ENCODE measurements at regions of chr4 and their contacts with region 1.

Region 1: GRCh38 chr4:2536193-2537010 is at the start of gene FAM193A:
- DNase-seq: peak; percentile 97 to 100 (median 100)

Region 2: GRCh38 chr4:2241410-2242353 is 294.7 kb before region 1 on chr4 and contains the starts of genes HAUS3 and POLN:
- intact Hi-C with region 1: loop called (anchors 2 kb)
- DNase-seq: peak; percentile 96 to 100 (median 98)

Region 3: GRCh38 chr4:2262143-2262943 is 274.1 kb before region 1 on chr4:
- intact Hi-C with region 1: loop called (anchors 5 kb)
- DNase-seq: peak; percentile 97 to 100 (median 100)

Region 4: DNA sequence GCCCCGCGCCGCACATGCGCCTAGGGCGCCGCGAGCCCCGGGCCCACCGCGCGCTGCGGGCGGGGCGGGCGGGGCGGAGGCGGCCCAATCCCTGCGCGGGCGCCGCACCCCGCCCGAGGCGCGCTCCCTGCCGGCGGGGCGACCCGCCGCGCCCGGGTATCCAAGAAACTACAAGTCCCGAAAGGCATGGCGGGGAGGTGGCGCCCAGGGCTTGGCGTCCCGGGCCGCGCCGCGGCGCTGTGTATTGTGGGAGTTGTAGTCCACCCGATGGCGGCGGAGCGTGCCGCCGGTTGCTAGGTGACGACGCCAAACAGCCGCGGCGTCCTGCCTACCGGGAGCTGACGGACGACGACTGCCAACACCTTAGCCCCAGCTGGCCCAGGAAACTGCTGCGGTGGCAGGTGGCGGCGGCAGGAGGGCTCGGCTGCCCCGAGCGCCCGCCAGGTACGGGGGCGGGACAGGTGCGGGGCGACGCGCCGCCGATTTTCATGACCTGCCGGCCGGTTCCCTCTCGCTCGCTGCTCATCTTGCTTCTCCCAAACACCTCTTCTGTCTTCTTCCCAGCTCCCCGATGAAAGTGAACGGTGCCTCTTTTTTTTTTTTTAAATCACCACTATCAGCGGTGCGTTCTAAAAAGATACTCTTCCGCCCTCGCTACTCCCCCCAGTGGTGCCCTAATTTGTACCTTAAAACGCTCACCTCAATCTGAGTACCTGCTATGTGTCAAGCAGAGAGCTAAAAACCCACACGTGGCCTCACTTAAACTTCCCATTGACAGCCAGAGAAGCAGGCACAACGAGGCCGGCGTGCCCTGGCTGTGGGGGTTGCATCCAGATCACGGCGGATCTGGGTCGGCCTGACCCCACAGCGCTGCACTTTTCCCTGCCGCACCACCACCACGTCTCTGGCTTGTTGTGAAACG is 117.5 kb before region 1 on chr4 and contains the start of gene CFAP99:
- intact Hi-C with region 1: loop called (anchors 5 kb)
- DNase-seq: peak; percentile 94 to 99 (median 98)

Region 5: GRCh38 chr4:2468445-2469192 is 67.8 kb before region 1 on chr4 and contains the start of gene RNF4:
- intact Hi-C with region 1: loop called (anchors 1 kb)
- DNase-seq: peak; percentile 91 to 99 (median 94)

Region 6: DNA sequence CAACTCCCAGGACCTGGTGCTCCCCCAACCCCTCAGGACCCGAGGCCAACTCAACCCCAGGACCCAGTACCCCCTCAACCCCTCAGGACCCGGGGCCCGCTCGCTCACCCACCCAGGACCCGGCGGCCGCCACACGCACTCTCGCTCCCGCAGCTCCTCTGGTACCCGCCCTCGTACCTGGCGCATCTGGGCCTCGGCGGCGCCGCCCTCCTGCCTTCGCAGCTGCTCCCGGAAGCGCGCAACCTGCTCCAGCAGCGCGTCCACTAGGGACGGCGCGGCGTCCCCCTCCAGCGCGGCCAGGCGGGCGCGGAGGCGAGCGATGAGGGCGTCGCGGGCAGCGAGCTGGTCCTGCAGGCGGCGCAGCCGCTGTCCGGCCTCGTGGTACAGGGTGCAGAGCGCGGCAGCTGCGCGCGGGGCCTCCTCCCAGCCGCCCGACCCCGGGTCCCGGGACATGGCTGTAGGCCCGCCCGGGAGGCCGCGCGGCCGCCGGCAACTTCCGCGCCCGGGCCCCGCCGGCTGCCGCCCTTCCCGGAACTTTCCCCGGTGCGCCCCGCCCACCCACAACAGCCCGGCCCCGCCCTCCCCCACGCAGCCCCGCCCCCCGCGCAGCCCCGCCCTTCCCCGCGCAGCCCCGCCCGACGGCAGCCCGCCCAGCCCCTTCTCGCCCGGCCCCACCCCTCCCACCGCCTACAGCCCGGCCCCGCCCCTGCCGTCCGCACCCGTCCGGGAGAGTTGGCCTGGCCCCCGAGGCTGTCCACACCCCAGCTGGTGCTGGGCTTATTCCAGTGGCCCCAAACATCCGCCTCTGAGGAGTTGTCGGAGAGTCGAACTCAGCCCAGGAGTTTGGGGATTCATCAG is 219.7 kb after region 1 on chr4 and contains the start of gene TNIP2:
- intact Hi-C with region 1: loop called (anchors 5 kb)
- DNase-seq: peak; percentile 31 to 95 (median 62)

Region 7: GRCh38 chr4:2963175-2963965 is 427.0 kb after region 1 on chr4 and contains the starts of genes GRK4 and NOP14:
- intact Hi-C with region 1: loop called (anchors 2 kb)
- DNase-seq: peak; percentile 94 to 99 (median 98)

Measured in posterior cingulate gyrus (tissue), 11 donors.